SK-N-SH (cell line): ENCODE measurements at regions of chr5 and their contacts with region 1.

Region 1: GRCh38 chr5:138035605-138036537 is 3.0 kb upstream of the FAM13B start:
- DNase-seq: peak; percentile 75
- H3K4me3 ChIP-seq: peak overlapping the region in 1 of 2 experiments; percentile 38; a peak in 1 of 4 replicates
- H3K27ac ChIP-seq: peak overlapping the region; percentile 2 to 50; a peak in 3 of 4 replicates
- H3K4me1 ChIP-seq: peaks cover 6 to 12% of the 10 kb centered on the region in 2 experiments; a peak in 3 of 4 replicates
- H3K27me3 ChIP-seq: no peaks in the 10 kb centered on the region
- CTCF ChIP-seq: peak; percentile 93
- EP300 ChIP-seq: no peak
- RAD21 ChIP-seq: peak; percentile 78

Region 2: DNA sequence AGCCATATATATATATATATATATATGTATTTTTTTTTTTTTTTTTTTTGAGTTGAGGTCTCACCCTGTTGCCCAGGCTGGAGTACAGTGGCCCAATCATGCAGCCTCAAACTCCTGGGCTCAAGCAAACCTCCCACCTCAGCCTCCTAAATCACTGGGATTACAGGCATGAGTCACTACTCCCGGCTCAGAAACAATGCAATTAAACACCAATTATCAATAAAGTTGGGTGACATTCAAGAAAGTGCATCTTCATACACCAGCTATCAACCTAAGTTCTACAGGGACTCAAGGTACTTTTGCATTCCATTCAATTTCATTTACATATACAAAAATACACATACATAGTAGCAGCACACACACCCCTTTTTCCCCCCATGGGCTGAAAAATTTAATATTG is 10.6 kb before region 1 on chr5:
- CTCF ChIA-PET with region 1: interaction called, 16 read pairs
- POLR2A ChIA-PET with region 1: no interaction called
- DNase-seq: no peak
- H3K4me3 ChIP-seq: no peak overlapping the region
- H3K27ac ChIP-seq: no peak overlapping the region
- H3K4me1 ChIP-seq: 0 out of 4 replicates have a peak, but pooled peaks cover 0 to 7% of the 10 kb centered on the region in 2 experiments
- H3K27me3 ChIP-seq: no peaks in the 10 kb centered on the region
- CTCF ChIP-seq: no peak
- EP300 ChIP-seq: no peak
- RAD21 ChIP-seq: no peak

Region 3: DNA sequence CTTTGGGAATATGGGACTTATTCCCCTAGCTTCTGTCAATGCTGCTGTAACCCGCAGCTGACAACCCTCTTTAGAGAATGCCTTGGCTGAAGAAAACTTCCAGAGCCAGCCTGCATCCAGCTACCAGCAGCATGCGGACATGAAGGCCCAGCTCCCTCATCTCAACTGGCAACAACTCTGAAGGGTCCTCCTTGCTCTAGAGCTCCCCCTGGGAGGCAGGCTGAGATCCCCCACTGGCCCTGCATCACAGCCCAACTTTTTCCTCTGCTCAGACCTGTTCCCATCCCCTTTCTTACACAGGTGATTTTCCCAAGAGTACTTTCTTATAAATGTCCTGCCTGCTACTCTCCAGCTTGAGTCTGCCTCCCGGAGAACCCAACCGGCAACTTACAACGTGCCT is 29.2 kb after region 1 on chr5:
- CTCF ChIA-PET with region 1: interaction called, 74 read pairs
- POLR2A ChIA-PET with region 1: no interaction called
- DNase-seq: no peak
- H3K4me3 ChIP-seq: no peak overlapping the region
- H3K27ac ChIP-seq: no peak overlapping the region
- H3K4me1 ChIP-seq: no peaks in the 10 kb centered on the region
- H3K27me3 ChIP-seq: no peaks in the 10 kb centered on the region
- CTCF ChIP-seq: peak; percentile 30
- EP300 ChIP-seq: no peak
- RAD21 ChIP-seq: no peak

Region 4: DNA sequence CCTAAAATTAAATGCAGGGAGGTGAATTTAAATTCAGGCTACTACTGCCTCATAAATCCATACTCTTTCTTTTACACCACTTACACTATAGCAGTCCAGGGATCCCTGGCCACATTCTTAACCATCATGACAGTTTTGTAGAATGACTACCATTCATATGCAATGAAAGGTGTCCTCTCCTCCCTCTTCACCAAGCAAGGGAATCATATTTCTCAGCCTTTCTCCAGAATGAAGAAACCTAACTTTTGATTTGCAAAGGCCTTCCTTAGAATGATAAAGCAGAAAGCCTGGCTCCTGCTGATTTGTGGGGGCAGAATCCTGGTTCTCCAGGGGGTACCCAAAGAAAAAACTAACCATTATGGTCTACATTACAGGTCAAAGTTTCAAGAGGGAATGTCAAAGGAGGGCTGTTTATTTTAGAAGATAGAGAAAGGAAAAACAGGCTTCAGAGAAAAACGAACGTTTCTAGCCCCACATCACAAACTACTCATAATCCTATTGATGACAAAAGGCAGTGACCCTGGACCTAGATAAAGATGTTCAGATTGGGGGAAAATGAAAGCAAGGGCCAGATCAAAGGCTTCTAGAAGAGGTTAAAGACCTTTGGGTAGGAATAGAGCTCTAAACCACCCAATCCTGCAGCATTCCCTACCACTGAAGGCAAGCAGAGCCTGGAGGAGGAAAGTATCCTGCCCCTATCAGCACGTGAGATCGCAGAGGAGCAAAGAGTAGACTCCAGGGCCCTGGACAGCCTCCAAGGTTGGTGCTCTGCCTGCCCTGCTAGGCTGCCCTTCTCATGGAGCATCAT is 59.4 kb after region 1 on chr5:
- CTCF ChIA-PET with region 1: interaction called, 12 read pairs
- POLR2A ChIA-PET with region 1: no interaction called
- DNase-seq: no peak
- H3K4me3 ChIP-seq: no peak overlapping the region
- H3K27ac ChIP-seq: no peak overlapping the region
- H3K4me1 ChIP-seq: no peaks in the 10 kb centered on the region
- H3K27me3 ChIP-seq: peaks cover 12% of the 10 kb centered on the region; the same call in 1 of the 2 replicates
- CTCF ChIP-seq: no peak
- EP300 ChIP-seq: no peak
- RAD21 ChIP-seq: no peak

Region 5: GRCh38 chr5:138110266-138110963 is 74.5 kb after region 1 on chr5:
- CTCF ChIA-PET with region 1: interaction called, 16 read pairs
- POLR2A ChIA-PET with region 1: no interaction called
- DNase-seq: no peak
- H3K4me3 ChIP-seq: no peak overlapping the region
- H3K27ac ChIP-seq: no peak overlapping the region
- H3K4me1 ChIP-seq: no peaks in the 10 kb centered on the region
- H3K27me3 ChIP-seq: no peaks in the 10 kb centered on the region
- CTCF ChIP-seq: no peak
- EP300 ChIP-seq: no peak
- RAD21 ChIP-seq: no peak

Region 6: DNA sequence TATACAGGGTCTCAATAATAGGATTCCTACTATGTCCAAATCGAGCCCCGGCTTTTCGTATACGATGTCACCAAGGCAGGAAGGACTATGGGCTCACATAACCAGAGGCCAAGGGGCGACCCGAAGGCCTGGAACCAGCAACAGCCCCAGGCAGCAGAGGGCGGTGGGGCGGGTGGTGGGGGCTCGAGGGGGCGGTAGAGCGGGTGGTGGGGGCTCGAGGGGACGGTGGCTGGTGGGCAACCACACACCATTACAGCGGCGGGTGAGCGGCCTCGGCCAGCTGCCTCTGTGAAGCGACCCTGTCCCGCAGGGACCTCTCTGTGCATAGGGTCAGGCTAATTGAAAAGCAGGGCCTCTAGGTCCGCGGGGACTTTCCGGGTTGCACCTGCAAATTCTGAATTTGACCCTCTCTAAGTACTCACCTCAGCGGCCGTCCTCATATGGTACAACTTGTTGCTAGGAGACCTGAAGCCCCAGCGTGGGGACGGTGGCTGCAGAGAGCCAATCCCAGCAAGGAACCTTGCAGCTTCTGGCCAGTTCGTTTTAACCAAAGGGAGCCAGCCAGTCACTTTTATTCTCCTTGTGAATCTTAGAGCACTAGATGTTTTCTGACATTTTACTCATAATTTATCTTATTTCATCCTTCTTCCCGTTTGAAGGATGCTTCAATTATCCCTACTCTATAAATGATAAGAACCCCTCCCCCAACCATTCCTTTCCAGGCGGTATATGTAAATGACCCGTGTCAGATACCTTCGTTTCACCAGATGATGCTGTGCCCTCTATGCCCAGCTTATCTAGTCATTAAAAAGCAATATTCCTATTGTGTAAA is 103.3 kb after region 1 on chr5 and contains the start of gene NME5:
- CTCF ChIA-PET with region 1: interaction called, 18 read pairs
- POLR2A ChIA-PET with region 1: no interaction called
- DNase-seq: peak; percentile 88
- H3K4me3 ChIP-seq: peak within 1 kb of the TSS; percentile 77 to 80
- H3K27ac ChIP-seq: peak within 1 kb of the TSS in 1 of 2 experiments; percentile 12; a peak in 1 of 4 replicates
- H3K4me1 ChIP-seq: no peaks in the 10 kb centered on the region
- H3K27me3 ChIP-seq: no peaks in the 10 kb centered on the region
- CTCF ChIP-seq: no peak
- EP300 ChIP-seq: no peak
- RAD21 ChIP-seq: no peak
- polyA plus RNA-seq, gene NME5: 3.7 and 4.1 TPM in 2 replicates